Naive thymus-derived CD4-positive, alpha-beta T cell (primary cell): ENCODE measurements at regions of chr4 and their contacts with region 1.

Region 1: DNA sequence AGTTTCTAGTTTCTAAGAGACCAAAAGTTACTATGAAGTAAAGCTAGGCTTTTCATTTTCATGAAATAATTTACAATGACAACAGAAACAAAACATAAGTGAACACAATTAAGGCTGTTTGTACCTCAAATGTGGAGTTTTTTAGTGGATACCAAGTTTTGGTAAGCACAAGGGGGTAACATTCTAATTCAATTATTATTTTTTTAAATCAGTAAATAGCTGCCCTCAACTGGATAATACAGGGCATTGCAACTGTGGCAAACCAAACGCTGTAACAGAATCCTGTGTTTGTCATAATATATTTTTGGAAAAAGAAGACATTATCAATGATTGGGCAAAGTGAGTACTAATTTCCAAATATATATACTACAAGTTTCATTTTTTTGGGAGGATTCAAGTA is 150.3 kb downstream of the FBXW7 start:
- DNase-seq: peak in 3 of 9 donors; percentile 12 to 23 (median 15)
- ATAC-seq: no peak
- H3K4me3 ChIP-seq: no peak overlapping the region
- H3K4me3 Mint-ChIP-seq: no peak overlapping the region
- H3K27ac ChIP-seq: no peak overlapping the region
- H3K27ac Mint-ChIP-seq: peak overlapping the region in 2 of 9 donors; percentile 38 to 68
- H3K4me1 ChIP-seq: peaks cover 0 to 14% of the 10 kb centered on the region in 2 donors
- H3K4me1 Mint-ChIP-seq: peaks cover 11 to 40% (median 29%) of the 10 kb centered on the region in 7 donors
- H3K27me3 ChIP-seq: no peaks in the 10 kb centered on the region
- H3K27me3 Mint-ChIP-seq: no peaks in the 10 kb centered on the region

Region 2: DNA sequence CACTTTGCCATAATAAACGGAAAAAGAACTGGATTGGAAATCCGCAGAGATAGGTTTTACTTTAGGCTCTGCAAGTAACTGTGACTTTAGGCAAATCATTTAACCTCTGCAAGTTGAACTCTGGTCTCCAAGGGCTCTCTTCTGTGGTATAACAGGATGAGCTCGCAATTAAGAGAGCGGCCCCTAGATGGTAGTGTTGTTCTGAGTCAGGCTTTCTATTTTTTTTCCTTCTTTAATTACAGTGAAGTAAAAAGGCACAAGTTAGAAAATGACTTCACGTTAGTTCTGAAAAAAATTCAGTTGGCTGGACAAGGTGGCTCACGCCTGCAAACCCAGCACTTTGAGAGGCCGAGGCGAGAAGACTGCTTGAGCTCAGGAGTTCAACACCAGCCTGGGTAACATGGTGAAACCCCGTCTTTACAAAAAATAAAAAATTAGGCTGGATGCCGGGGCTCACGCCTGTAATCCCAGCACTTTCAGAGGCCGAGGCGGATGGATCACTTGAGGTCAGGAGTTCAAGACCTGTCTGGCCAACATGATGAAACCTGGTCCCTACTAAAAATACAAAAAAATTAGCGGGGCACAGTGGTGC is 1268.1 kb before region 1 on chr4:
- CTCF ChIA-PET with region 1: no interaction called
- POLR2A ChIA-PET with region 1: no interaction called
- intact Hi-C with region 1: loop called (anchors 1 to 10 kb)
- DNase-seq: peak in 8 of 9 donors; percentile 22 to 63 (median 54)
- ATAC-seq: peak; percentile 86
- H3K4me3 ChIP-seq: no peak overlapping the region
- H3K4me3 Mint-ChIP-seq: no peak overlapping the region
- H3K27ac ChIP-seq: no peak overlapping the region
- H3K27ac Mint-ChIP-seq: peak overlapping the region in 1 of 9 donors; percentile 59
- H3K4me1 ChIP-seq: no peaks in the 10 kb centered on the region
- H3K4me1 Mint-ChIP-seq: peaks cover 0 to 8% (median 6%) of the 10 kb centered on the region in 7 donors
- H3K27me3 ChIP-seq: no peaks in the 10 kb centered on the region
- H3K27me3 Mint-ChIP-seq: no peaks in the 10 kb centered on the region

Region 3: GRCh38 chr4:151276787-151277562 is 1108.6 kb before region 1 on chr4 and contains the start of gene PRSS48:
- CTCF ChIA-PET with region 1: no interaction called
- POLR2A ChIA-PET with region 1: no interaction called
- intact Hi-C with region 1: loop called in 1 of 2 experiments (anchors 5 kb)
- DNase-seq: peak in 7 of 9 donors; percentile 1 to 53 (median 8)
- ATAC-seq: no peak
- H3K4me3 ChIP-seq: no peak within 1 kb of the TSS
- H3K4me3 Mint-ChIP-seq: no peak within 1 kb of the TSS
- H3K27ac ChIP-seq: no peak within 1 kb of the TSS
- H3K27ac Mint-ChIP-seq: no peak within 1 kb of the TSS
- H3K4me1 ChIP-seq: no peaks in the 10 kb centered on the region
- H3K4me1 Mint-ChIP-seq: no peaks in the 10 kb centered on the region
- H3K27me3 ChIP-seq: no peaks in the 10 kb centered on the region
- H3K27me3 Mint-ChIP-seq: peaks cover 0 to 24% (median 12%) of the 10 kb centered on the region in 5 donors
- total RNA-seq, gene PRSS48: not detected

Region 4: DNA sequence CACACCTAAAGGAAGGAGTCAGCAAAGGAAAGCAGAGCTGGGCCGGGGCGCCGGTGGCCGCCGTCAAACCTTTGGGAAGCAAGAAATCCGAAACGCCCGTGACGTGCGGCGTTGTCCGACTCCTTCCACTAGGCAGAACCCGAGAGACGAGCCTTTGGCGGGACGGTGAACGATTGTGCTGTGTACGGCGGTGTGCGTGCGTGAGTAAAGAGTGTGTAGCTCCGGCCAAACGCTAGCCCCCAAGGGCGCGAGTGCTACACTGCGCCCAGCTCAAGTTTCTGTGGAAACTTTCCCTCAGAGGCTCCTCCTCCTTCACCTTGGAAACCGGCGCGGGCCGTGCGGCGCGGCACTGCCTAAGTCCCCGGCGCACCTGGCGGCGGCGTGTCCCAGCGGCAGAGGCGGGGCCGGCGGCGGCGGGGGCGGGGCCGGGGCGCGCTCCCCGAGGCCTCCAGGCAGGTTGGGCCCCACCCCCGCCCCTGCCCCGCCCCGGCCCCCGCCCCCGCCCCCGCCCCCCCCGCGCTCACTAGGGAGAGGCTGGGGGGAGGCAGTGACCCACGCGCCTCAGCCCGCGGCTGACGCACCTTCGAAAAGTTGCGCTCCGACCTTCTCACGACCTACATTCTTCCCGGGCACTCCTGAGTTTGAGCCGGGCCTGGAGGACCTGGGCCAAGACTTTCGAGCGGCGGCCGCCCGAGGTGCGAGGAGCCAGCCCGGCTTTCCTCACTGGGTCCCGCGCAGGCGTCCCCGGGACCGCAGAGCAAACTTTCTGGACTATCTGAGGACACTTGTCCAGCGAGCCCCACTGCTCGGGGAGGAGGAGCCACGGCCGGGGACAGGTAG is 976.7 kb before region 1 on chr4 and contains the start of gene FHIP1A:
- CTCF ChIA-PET with region 1: no interaction called
- POLR2A ChIA-PET with region 1: no interaction called
- intact Hi-C with region 1: loop called in 1 of 2 experiments (anchors 5 kb)
- DNase-seq: peak; percentile 67 to 89 (median 87)
- ATAC-seq: peak; percentile 96
- H3K4me3 ChIP-seq: peak within 1 kb of the TSS; percentile 63
- H3K4me3 Mint-ChIP-seq: peak within 1 kb of the TSS; percentile 86 to 97 (median 94)
- H3K27ac ChIP-seq: peak within 1 kb of the TSS; percentile 53
- H3K27ac Mint-ChIP-seq: peak within 1 kb of the TSS; percentile 21 to 92 (median 85)
- H3K4me1 ChIP-seq: peaks cover 0 to 6% of the 10 kb centered on the region in 2 donors
- H3K4me1 Mint-ChIP-seq: peaks cover 15 to 26% (median 23%) of the 10 kb centered on the region in 7 donors
- H3K27me3 ChIP-seq: no peaks in the 10 kb centered on the region
- H3K27me3 Mint-ChIP-seq: peaks cover 0 to 56% (median 8%) of the 10 kb centered on the region in 5 donors
- total RNA-seq, gene FHIP1A: 0.05 to 2.7 (median 1.9) TPM

Region 5: GRCh38 chr4:152065545-152065944 is 320.0 kb before region 1 on chr4:
- CTCF ChIA-PET with region 1: interaction called, 3 read pairs
- POLR2A ChIA-PET with region 1: no interaction called
- intact Hi-C with region 1: loop called in 1 of 2 experiments (anchors 1 kb)
- DNase-seq: peak in 5 of 9 donors; percentile 6 to 36 (median 22)
- ATAC-seq: no peak
- H3K4me3 ChIP-seq: no peak overlapping the region
- H3K4me3 Mint-ChIP-seq: peak overlapping the region in 1 of 10 donors; percentile 1
- H3K27ac ChIP-seq: no peak overlapping the region
- H3K27ac Mint-ChIP-seq: peak overlapping the region in 3 of 9 donors; percentile 12 to 40 (median 28)
- H3K4me1 ChIP-seq: peaks cover 4 to 18% of the 10 kb centered on the region in 2 donors
- H3K4me1 Mint-ChIP-seq: peaks cover 18 to 70% (median 53%) of the 10 kb centered on the region in 7 donors
- H3K27me3 ChIP-seq: no peaks in the 10 kb centered on the region
- H3K27me3 Mint-ChIP-seq: no peaks in the 10 kb centered on the region

Region 6: DNA sequence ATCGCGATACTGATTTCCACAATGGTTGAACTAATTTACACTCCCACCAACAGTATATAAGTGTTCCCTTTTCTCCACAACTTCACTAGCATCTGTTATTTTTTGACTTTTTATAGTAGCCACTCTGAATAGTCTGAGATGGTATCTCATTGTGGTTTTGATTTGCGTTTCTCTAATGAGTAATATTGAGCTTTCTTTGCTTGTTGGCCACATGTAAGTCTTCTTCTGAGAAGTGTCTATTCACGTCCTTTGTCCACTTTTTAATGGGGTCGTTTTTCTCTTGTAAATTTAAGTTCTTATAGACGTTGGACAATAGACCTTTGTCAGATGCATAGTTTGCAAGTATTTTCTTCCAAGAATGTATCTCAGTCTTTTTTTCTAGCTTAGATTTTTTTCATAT is 140.3 kb after region 1 on chr4:
- CTCF ChIA-PET with region 1: no interaction called
- POLR2A ChIA-PET with region 1: no interaction called
- intact Hi-C with region 1: no loop called
- DNase-seq: no peak
- ATAC-seq: no peak
- H3K4me3 ChIP-seq: no peak overlapping the region
- H3K4me3 Mint-ChIP-seq: peak overlapping the region in 1 of 10 donors; percentile 18
- H3K27ac ChIP-seq: no peak overlapping the region
- H3K27ac Mint-ChIP-seq: no peak overlapping the region
- H3K4me1 ChIP-seq: peaks cover 3 to 27% of the 10 kb centered on the region in 2 donors
- H3K4me1 Mint-ChIP-seq: peaks cover 43 to 87% (median 70%) of the 10 kb centered on the region in 7 donors
- H3K27me3 ChIP-seq: no peaks in the 10 kb centered on the region
- H3K27me3 Mint-ChIP-seq: no peaks in the 10 kb centered on the region